B cell (primary cell): ENCODE measurements at regions of chr17 and their contacts with region 1.

Region 1: DNA sequence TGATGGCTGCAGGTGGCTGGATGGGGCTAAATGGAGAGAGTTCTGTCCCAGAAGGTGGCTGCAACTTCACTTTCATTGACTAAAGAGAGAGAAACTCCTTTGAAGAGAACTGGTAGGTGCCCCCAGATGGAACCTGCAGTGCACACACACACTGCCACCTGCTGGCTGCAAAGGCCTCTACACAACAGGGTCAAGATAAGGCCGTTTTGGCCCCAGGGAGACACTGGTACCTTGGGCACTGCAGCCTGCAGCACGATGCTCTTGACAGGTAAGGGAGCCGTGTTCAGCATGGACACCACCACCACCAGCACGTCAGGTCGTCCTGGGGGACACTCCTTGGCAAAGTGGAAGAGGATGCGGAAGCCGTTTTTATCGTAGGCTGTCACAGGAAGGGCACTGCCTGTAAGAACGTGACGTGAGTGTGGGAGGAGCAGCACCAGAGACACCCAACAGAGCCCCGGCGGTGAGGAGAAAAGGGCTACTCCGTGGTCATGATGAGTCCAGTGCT is 22.7 kb downstream of the GGA3 start:
- DNase-seq: peak; percentile 75
- ATAC-seq: peak; percentile 61
- H3K4me3 ChIP-seq: no peak overlapping the region
- H3K4me3 Mint-ChIP-seq: peak overlapping the region; percentile 33
- H3K27ac ChIP-seq: no peak overlapping the region
- H3K27ac Mint-ChIP-seq: peak overlapping the region; percentile 92
- H3K4me1 ChIP-seq: peaks cover 10 to 40% of the 10 kb centered on the region in 2 donors
- H3K4me1 Mint-ChIP-seq: peaks cover 30% of the 10 kb centered on the region
- H3K27me3 ChIP-seq: no peaks in the 10 kb centered on the region
- H3K27me3 Mint-ChIP-seq: no peaks in the 10 kb centered on the region
- CTCF ChIP-seq: peak; percentile 83

Region 2: GRCh38 chr17:74873038-74873873 is 365.5 kb before region 1 on chr17:
- CTCF ChIA-PET with region 1: no interaction called
- POLR2A ChIA-PET with region 1: interaction called, 14 read pairs
- intact Hi-C with region 1: no loop called
- DNase-seq: peak; percentile 100
- ATAC-seq: peak; percentile 93
- H3K4me3 ChIP-seq: peak overlapping the region; percentile 78 to 91 (median 86)
- H3K4me3 Mint-ChIP-seq: peak overlapping the region; percentile 81
- H3K27ac ChIP-seq: peak overlapping the region; percentile 95 to 96
- H3K27ac Mint-ChIP-seq: peak overlapping the region; percentile 94
- H3K4me1 ChIP-seq: peaks cover 12 to 15% of the 10 kb centered on the region in 2 donors
- H3K4me1 Mint-ChIP-seq: peaks cover 12% of the 10 kb centered on the region
- H3K27me3 ChIP-seq: no peaks in the 10 kb centered on the region
- H3K27me3 Mint-ChIP-seq: no peaks in the 10 kb centered on the region
- CTCF ChIP-seq: no peak

Region 3: GRCh38 chr17:75228305-75228704 is 10.4 kb before region 1 on chr17:
- CTCF ChIA-PET with region 1: interaction called, 22 read pairs
- POLR2A ChIA-PET with region 1: no interaction called
- intact Hi-C with region 1: no loop called
- DNase-seq: no peak
- ATAC-seq: no peak
- H3K4me3 ChIP-seq: no peak overlapping the region
- H3K4me3 Mint-ChIP-seq: no peak overlapping the region
- H3K27ac ChIP-seq: no peak overlapping the region
- H3K27ac Mint-ChIP-seq: peak overlapping the region; percentile 53
- H3K4me1 ChIP-seq: no peaks in the 10 kb centered on the region
- H3K4me1 Mint-ChIP-seq: no peaks in the 10 kb centered on the region
- H3K27me3 ChIP-seq: no peaks in the 10 kb centered on the region
- H3K27me3 Mint-ChIP-seq: no peaks in the 10 kb centered on the region
- CTCF ChIP-seq: no peak

Region 4: GRCh38 chr17:75250009-75250471 is 11.3 kb after region 1 on chr17:
- CTCF ChIA-PET with region 1: interaction called, 18 read pairs
- POLR2A ChIA-PET with region 1: no interaction called
- intact Hi-C with region 1: no loop called
- DNase-seq: peak; percentile 50
- ATAC-seq: peak; percentile 82
- H3K4me3 ChIP-seq: peak overlapping the region in 1 of 5 experiments; percentile 1
- H3K4me3 Mint-ChIP-seq: peak overlapping the region; percentile 71
- H3K27ac ChIP-seq: peak overlapping the region; percentile 49 to 68
- H3K27ac Mint-ChIP-seq: peak overlapping the region; percentile 91
- H3K4me1 ChIP-seq: peaks cover 32 to 50% of the 10 kb centered on the region in 2 donors
- H3K4me1 Mint-ChIP-seq: peaks cover 56% of the 10 kb centered on the region
- H3K27me3 ChIP-seq: no peaks in the 10 kb centered on the region
- H3K27me3 Mint-ChIP-seq: no peaks in the 10 kb centered on the region
- CTCF ChIP-seq: no peak

Region 5: GRCh38 chr17:75271233-75271954 is 32.7 kb after region 1 on chr17:
- CTCF ChIA-PET with region 1: interaction called, 18 read pairs
- POLR2A ChIA-PET with region 1: interaction called, 6 read pairs
- intact Hi-C with region 1: loop called (anchors 2 kb)
- DNase-seq: peak; percentile 94
- ATAC-seq: peak; percentile 90
- H3K4me3 ChIP-seq: peak overlapping the region; percentile 26 to 93 (median 74)
- H3K4me3 Mint-ChIP-seq: peak overlapping the region; percentile 88
- H3K27ac ChIP-seq: peak overlapping the region; percentile 78 to 83
- H3K27ac Mint-ChIP-seq: peak overlapping the region; percentile 82
- H3K4me1 ChIP-seq: peaks cover 17 to 28% of the 10 kb centered on the region in 2 donors
- H3K4me1 Mint-ChIP-seq: peaks cover 23% of the 10 kb centered on the region
- H3K27me3 ChIP-seq: no peaks in the 10 kb centered on the region
- H3K27me3 Mint-ChIP-seq: no peaks in the 10 kb centered on the region
- CTCF ChIP-seq: peak; percentile 73